Naive thymus-derived CD4-positive, alpha-beta T cell (primary cell): ENCODE measurements at regions of chr22 and their contacts with region 1.

Region 1: GRCh38 chr22:42296381-42296853 is 26.0 kb upstream of the TCF20 start:
- DNase-seq: peak in 4 of 9 donors; percentile 37 to 51 (median 44)
- ATAC-seq: no peak
- H3K4me3 ChIP-seq: no peak overlapping the region
- H3K4me3 Mint-ChIP-seq: peak overlapping the region in 5 of 10 donors; percentile 2 to 63 (median 29)
- H3K27ac ChIP-seq: peak overlapping the region; percentile 39
- H3K27ac Mint-ChIP-seq: peak overlapping the region in 8 of 9 donors; percentile 36 to 95 (median 90)
- H3K4me1 ChIP-seq: peaks cover 23 to 69% of the 10 kb centered on the region in 2 donors
- H3K4me1 Mint-ChIP-seq: peaks cover 50 to 94% (median 79%) of the 10 kb centered on the region in 7 donors
- H3K27me3 ChIP-seq: no peaks in the 10 kb centered on the region
- H3K27me3 Mint-ChIP-seq: no peaks in the 10 kb centered on the region

Region 2: DNA sequence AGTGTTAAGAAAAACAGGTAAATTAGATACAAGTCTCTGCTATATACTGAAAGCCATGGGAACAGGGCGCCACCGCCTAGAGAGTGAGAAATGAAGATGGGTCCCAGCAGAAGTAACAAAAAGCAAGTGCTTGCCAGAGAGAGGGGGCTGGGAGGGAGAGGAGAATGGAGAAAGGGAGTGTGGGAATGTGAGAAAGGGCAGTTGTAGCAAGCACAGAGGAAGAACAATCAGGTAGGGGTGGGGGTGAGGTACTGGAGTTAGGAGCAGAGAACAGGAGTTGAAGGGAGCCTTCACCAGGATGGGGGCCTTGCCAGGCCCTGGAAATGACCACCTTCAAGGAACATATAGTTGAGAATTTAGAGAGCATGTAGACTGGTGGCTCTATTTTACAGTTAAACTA is 92.8 kb before region 1 on chr22:
- CTCF ChIA-PET with region 1: no interaction called
- POLR2A ChIA-PET with region 1: no interaction called
- intact Hi-C with region 1: no loop called
- DNase-seq: no peak
- ATAC-seq: no peak
- H3K4me3 ChIP-seq: no peak overlapping the region
- H3K4me3 Mint-ChIP-seq: peak overlapping the region in 6 of 10 donors; percentile 9 to 60 (median 50)
- H3K27ac ChIP-seq: no peak overlapping the region
- H3K27ac Mint-ChIP-seq: peak overlapping the region in 5 of 9 donors; percentile 2 to 81 (median 49)
- H3K4me1 ChIP-seq: peaks cover 19 to 33% of the 10 kb centered on the region in 2 donors
- H3K4me1 Mint-ChIP-seq: peaks cover 52 to 88% (median 80%) of the 10 kb centered on the region in 7 donors
- H3K27me3 ChIP-seq: no peaks in the 10 kb centered on the region
- H3K27me3 Mint-ChIP-seq: no peaks in the 10 kb centered on the region

Region 3: GRCh38 chr22:42217019-42217751 is 79.2 kb before region 1 on chr22:
- CTCF ChIA-PET with region 1: no interaction called
- POLR2A ChIA-PET with region 1: no interaction called
- intact Hi-C with region 1: no loop called
- DNase-seq: no peak
- ATAC-seq: no peak
- H3K4me3 ChIP-seq: no peak overlapping the region
- H3K4me3 Mint-ChIP-seq: peak overlapping the region in 2 of 10 donors; percentile 27 to 58
- H3K27ac ChIP-seq: no peak overlapping the region
- H3K27ac Mint-ChIP-seq: peak overlapping the region; percentile 29 to 83 (median 58)
- H3K4me1 ChIP-seq: peaks cover 17 to 21% of the 10 kb centered on the region in 2 donors
- H3K4me1 Mint-ChIP-seq: peaks cover 35 to 65% (median 57%) of the 10 kb centered on the region in 7 donors
- H3K27me3 ChIP-seq: no peaks in the 10 kb centered on the region
- H3K27me3 Mint-ChIP-seq: no peaks in the 10 kb centered on the region

Region 4: GRCh38 chr22:42369245-42370041 is 73.0 kb after region 1 on chr22:
- CTCF ChIA-PET with region 1: interaction called, 4 read pairs
- POLR2A ChIA-PET with region 1: interaction called, 5 read pairs
- intact Hi-C with region 1: loop called in 1 of 2 experiments (anchors 2 kb)
- DNase-seq: peak; percentile 67 to 84 (median 79)
- ATAC-seq: peak; percentile 99
- H3K4me3 ChIP-seq: peak overlapping the region; percentile 66
- H3K4me3 Mint-ChIP-seq: peak overlapping the region; percentile 87 to 99 (median 93)
- H3K27ac ChIP-seq: peak overlapping the region; percentile 30
- H3K27ac Mint-ChIP-seq: peak overlapping the region; percentile 2 to 88 (median 77)
- H3K4me1 ChIP-seq: peaks cover 4 to 11% of the 10 kb centered on the region in 2 donors
- H3K4me1 Mint-ChIP-seq: peaks cover 9 to 19% (median 14%) of the 10 kb centered on the region in 7 donors
- H3K27me3 ChIP-seq: peaks cover 0 to 18% of the 10 kb centered on the region in 2 donors
- H3K27me3 Mint-ChIP-seq: peaks cover 19 to 49% (median 25%) of the 10 kb centered on the region in 5 donors

Region 5: GRCh38 chr22:43698403-43698802 is 1402.0 kb after region 1 on chr22:
- CTCF ChIA-PET with region 1: no interaction called
- POLR2A ChIA-PET with region 1: no interaction called
- intact Hi-C with region 1: no loop called
- DNase-seq: no peak
- ATAC-seq: no peak
- H3K4me3 ChIP-seq: no peak overlapping the region
- H3K4me3 Mint-ChIP-seq: no peak overlapping the region
- H3K27ac ChIP-seq: no peak overlapping the region
- H3K27ac Mint-ChIP-seq: no peak overlapping the region
- H3K4me1 ChIP-seq: no peaks in the 10 kb centered on the region
- H3K4me1 Mint-ChIP-seq: no peaks in the 10 kb centered on the region
- H3K27me3 ChIP-seq: no peaks in the 10 kb centered on the region
- H3K27me3 Mint-ChIP-seq: peaks cover 13 to 25% (median 14%) of the 10 kb centered on the region in 5 donors